ENCODE measurements at regions of chr1 and their contacts with region 1.

Region 1: DNA sequence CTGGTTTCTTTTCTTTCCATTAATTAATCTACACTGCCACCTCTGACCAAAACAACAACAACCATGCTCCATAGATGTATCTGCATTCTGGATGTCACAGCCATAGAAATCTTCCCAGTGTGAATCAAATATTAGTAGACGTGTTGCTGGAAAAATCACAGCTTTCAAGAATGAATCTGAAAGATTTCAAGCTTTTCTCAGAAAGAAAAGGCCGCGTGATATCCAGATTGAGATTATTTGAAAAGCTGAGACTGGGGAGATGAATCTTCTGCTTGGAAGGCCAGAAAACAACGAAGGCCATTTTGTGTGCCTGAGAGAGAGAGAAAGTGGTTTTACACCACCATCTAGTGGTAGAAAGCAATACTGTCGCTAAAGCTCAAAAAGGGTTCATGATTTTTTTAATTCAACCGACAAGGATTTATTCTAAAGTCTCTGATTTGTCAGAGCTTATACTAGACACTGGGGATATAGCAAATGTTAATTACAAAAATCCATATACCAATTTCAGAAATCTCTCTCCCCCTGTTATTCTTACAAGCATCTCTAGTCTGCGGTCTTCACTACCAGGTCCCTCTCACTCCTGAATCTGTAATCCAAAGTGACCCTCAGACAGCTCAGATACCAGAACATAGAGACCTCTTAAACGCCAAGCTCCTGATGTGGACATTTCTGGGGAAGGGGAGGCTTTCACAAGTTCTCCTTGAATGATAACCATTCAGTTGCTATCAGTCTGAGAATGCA is 87.5 kb upstream of the SGIP1 start:
- DNase-seq: no peak
- H3K4me3 ChIP-seq: no peak overlapping the region
- H3K27me3 ChIP-seq: no peaks in the 10 kb centered on the region
- CTCF ChIP-seq: peak; percentile 74

Region 2: GRCh38 chr1:65958561-65959350 is 487.7 kb before region 1 on chr1:
- CTCF ChIA-PET with region 1: interaction called, 30 read pairs
- POLR2A ChIA-PET with region 1: no interaction called
- DNase-seq: no peak
- H3K4me3 ChIP-seq: no peak overlapping the region
- H3K27me3 ChIP-seq: no peaks in the 10 kb centered on the region
- CTCF ChIP-seq: peak; percentile 51

Region 3: GRCh38 chr1:66258404-66259105 is 187.9 kb before region 1 on chr1:
- CTCF ChIA-PET with region 1: interaction called, 293 read pairs
- POLR2A ChIA-PET with region 1: no interaction called
- DNase-seq: no peak
- H3K4me3 ChIP-seq: no peak overlapping the region
- H3K27me3 ChIP-seq: no peaks in the 10 kb centered on the region
- CTCF ChIP-seq: no peak

Region 4: GRCh38 chr1:66331657-66332547 is 114.5 kb before region 1 on chr1:
- CTCF ChIA-PET with region 1: interaction called, 16 read pairs
- POLR2A ChIA-PET with region 1: no interaction called
- DNase-seq: no peak
- H3K4me3 ChIP-seq: peak overlapping the region; percentile 60
- H3K27me3 ChIP-seq: no peaks in the 10 kb centered on the region
- CTCF ChIP-seq: peak; percentile 50

Region 5: GRCh38 chr1:66495495-66495894 is 49.1 kb after region 1 on chr1:
- CTCF ChIA-PET with region 1: interaction called, 20 read pairs
- POLR2A ChIA-PET with region 1: no interaction called
- DNase-seq: peak; percentile 69
- H3K4me3 ChIP-seq: no peak overlapping the region
- H3K27me3 ChIP-seq: no peaks in the 10 kb centered on the region
- CTCF ChIP-seq: no peak

Region 6: DNA sequence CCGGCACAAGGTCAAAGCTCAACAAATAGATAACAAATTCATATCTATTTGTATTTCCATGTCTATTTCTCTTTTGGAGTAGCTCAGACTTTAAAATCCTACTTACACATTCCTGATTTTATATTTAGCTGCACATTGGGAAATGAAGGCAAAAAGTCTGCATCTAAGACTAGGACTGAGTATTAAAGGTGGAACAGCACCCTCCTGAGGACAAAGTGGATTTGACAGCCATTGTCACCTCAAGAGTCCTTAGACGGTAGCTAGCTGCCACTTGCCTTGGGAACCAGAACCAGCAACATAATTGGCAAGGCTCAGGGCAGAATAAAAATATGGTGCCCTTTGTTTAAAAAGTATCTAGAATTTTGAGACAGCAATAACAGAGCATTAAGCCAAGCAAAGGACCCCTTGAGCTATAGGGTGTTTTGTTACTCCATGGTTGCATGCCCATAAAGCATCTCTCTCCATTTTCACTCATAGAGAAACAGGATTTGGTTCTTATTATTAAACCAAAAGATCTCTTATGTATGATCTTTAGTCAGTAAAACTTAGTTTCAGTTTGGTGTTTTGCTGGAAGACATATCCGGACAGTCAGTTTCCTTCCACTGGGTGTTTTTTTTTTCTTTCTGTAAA is 57.5 kb after region 1 on chr1:
- CTCF ChIA-PET with region 1: interaction called, 41 read pairs
- POLR2A ChIA-PET with region 1: no interaction called
- DNase-seq: no peak
- H3K4me3 ChIP-seq: no peak overlapping the region
- H3K27me3 ChIP-seq: no peaks in the 10 kb centered on the region
- CTCF ChIP-seq: peak; percentile 67

Region 7: DNA sequence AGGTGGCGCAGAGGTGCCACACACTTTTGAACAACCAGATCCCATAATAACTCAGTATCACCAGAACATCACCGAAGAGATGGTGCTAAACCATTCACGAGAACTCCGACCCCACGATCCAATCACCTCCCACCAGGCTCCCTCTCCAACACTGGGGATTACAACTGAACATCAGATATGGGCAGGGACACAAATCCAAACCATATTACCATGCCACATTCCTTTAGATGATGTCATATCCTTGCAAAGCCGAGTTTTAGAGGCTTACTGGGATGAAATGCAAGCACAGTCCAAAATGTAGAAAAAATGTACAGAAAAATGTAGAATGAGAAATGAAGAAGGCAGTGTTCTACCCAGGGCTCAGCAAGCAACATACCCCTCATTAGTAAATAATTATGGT is 152.2 kb after region 1 on chr1:
- CTCF ChIA-PET with region 1: no interaction called
- POLR2A ChIA-PET with region 1: no interaction called
- DNase-seq: peak; percentile 41
- H3K4me3 ChIP-seq: no peak overlapping the region
- H3K27me3 ChIP-seq: no peaks in the 10 kb centered on the region
- CTCF ChIP-seq: no peak